Right lobe of liver (tissue), 6 donors: ENCODE measurements at regions of chr10 and their contacts with region 1.

Region 1: DNA sequence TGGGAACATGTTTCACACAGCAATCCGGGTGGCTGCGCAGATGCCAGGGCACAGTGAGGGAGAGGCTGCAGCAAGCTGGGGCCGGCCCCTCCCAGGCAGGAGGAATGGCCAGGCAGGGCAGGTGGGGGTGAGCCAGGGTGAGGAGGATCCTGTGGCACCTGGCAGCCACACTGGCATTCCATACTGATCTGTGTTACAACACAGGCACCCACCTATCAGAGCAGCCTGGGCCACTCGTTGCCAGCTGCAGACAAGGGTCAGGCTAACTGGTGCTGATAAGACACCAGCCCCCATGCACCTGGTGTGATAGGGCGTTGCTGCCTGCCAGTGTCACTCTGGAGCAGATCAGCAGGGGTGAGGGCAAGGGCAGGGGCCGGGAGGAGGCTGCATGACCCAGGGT is 16.6 kb upstream of the RET start:
- DNase-seq: peak; percentile 91 to 96 (median 96)
- ATAC-seq: peak; percentile 92 to 96 (median 94)
- H3K4me3 ChIP-seq: no peak overlapping the region
- H3K27ac ChIP-seq: peak overlapping the region in 1 of 3 donors; percentile 21
- H3K4me1 ChIP-seq: peaks cover 0 to 34% (median 11%) of the 10 kb centered on the region in 4 donors
- H3K27me3 ChIP-seq: no peaks in the 10 kb centered on the region
- CTCF ChIP-seq: no peak
- POLR2A ChIP-seq: no peak

Region 2: DNA sequence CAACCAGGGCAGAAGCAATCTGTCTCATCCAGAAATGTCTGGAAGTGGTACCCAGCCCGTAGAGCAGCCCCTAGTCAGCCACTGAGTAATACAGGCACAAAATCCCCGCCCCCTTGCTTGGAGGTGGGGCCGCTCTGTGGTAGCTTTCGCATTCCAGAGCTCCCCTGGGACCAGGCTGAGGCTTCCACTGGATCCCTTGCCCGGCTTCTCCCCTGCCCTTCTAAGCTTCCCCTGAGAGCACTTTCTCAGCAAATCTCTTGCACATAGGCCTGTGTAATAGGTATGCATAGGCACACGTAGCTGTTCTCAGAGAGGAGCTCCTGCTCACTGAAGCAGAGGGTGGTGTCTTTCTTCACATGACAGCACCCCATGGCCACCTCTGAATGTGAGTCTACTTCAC is 133.4 kb before region 1 on chr10:
- intact Hi-C with region 1: no loop called
- DNase-seq: no peak
- ATAC-seq: no peak
- H3K4me3 ChIP-seq: no peak overlapping the region
- H3K27ac ChIP-seq: no peak overlapping the region
- H3K4me1 ChIP-seq: no peaks in the 10 kb centered on the region
- H3K27me3 ChIP-seq: no peaks in the 10 kb centered on the region
- CTCF ChIP-seq: no peak
- POLR2A ChIP-seq: no peak

Region 3: DNA sequence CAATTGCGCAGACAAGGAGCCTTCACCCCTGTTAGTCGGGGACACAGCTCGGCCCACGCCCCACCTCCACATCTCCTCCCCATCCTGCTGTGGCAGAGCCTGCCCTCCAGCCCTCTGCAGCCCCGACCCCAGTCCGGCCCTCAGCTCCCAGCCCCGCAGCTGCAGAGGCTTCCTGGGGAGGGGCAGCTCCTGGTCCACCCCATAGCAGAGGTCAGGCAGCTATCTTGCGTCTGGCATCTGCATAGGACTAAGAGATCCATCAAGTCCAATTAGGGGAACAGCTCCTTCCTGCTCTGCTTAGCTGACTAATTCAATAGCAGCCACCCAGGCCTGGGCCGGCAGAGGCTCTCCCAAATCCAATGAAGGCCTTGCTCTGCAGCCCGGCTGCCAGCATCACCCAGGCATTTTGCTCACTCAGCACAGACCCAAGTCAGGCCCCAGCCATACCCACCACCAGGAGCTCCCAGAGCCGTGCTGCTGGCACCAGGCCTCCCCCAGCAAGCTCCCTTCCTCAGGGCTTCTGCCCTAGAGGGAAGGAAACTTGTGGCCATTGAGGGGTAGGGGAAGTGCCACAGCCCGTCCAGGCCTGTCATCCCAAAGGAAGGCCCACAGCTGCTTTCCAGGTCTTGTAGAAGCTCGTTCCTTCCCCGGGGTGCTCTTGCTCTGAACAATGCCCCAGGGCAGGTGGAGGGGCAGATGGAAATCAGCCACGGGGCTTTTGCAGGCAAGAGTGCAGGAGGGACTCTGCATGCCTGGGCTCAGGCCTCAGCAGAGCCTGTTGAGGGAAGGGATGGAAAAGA is 89.6 kb before region 1 on chr10:
- intact Hi-C with region 1: loop called in 1 of 2 experiments (anchors 5 kb)
- DNase-seq: peak in 1 of 3 donors; percentile 12
- ATAC-seq: peak in 1 of 4 donors; percentile 10
- H3K4me3 ChIP-seq: no peak overlapping the region
- H3K27ac ChIP-seq: no peak overlapping the region
- H3K4me1 ChIP-seq: no peaks in the 10 kb centered on the region
- H3K27me3 ChIP-seq: no peaks in the 10 kb centered on the region
- CTCF ChIP-seq: no peak
- POLR2A ChIP-seq: no peak